Dendritic cell treated with granulocyte-macrophage colony-stimulating factor and Interleukin-4, amounts not matched to agents 40 ng/mL and 50 ng/mL, for 4 days (primary cell): ENCODE measurements at regions of chr18 and their contacts with region 1.

Region 1: DNA sequence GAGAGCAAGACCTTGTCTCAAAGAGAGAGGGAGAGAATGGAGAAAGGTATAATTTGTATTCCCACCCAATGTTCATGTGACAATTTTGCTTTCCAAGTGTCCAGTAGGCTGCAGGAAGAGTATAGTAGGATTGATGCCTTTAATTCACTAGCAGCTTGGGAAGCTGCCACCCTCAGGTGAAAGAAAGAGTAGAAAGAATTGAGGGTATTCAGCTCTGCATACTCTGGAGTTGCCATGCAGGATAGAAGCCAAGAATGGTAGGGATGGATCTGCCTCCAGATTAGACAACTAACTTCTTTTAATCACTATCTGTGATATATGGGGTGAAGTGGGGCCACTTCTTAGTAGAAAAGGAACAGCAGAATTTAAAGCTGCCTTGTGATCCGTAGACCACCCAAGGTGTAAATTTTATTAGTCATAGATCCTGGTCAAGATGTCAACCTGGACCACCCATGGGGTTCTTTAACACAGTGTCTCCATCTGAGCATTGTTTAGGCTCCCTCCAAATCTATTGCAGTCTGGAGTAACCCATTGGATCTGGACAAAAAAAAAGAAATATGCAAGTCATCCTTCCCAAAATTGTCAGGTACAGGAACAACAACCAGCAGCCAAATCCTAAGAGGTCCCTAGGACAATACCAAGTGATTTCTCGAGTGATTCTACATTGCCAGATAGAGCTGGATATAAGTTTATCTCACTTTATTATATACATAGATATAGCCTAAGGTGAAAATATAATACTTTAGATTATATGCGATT is 33.1 kb upstream of the DTNA start:
- H3K4me3 Mint-ChIP-seq: no peak overlapping the region
- H3K27ac Mint-ChIP-seq: no peak overlapping the region
- H3K4me1 Mint-ChIP-seq: peaks cover 5% of the 10 kb centered on the region
- H3K27me3 Mint-ChIP-seq: no peaks in the 10 kb centered on the region

Region 2: GRCh38 chr18:34115409-34116081 is 561.5 kb before region 1 on chr18:
- intact Hi-C with region 1: no loop called
- H3K4me3 Mint-ChIP-seq: no peak overlapping the region
- H3K27ac Mint-ChIP-seq: no peak overlapping the region
- H3K4me1 Mint-ChIP-seq: no peaks in the 10 kb centered on the region
- H3K27me3 Mint-ChIP-seq: no peaks in the 10 kb centered on the region

Region 3: DNA sequence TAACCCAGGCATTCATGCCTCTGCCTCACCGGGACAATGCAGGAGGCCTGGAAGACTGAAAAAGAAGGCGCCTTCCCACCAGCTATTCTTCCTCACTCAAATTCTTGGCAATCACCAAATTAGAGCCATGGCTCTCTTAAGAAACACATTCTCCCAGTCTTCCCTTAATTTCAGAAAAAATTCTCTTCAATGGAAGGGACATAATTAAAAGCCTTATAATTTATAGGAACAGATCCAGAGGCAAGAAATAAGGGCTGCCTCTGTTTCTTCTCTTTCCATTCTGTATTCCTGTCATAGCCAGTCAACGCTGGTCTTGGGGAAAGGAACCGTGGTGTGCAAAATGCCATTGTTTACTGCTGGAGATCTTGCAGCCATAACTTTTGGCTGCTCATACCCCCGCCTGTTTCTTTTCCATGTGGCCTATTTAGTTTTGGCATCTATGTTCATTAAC is 65.9 kb after region 1 on chr18:
- intact Hi-C with region 1: loop called (anchors 10 kb)
- H3K4me3 Mint-ChIP-seq: no peak overlapping the region
- H3K27ac Mint-ChIP-seq: no peak overlapping the region
- H3K4me1 Mint-ChIP-seq: no peaks in the 10 kb centered on the region
- H3K27me3 Mint-ChIP-seq: no peaks in the 10 kb centered on the region